ENCODE measurements at regions of chr17 and their contacts with region 1.

Region 1: DNA sequence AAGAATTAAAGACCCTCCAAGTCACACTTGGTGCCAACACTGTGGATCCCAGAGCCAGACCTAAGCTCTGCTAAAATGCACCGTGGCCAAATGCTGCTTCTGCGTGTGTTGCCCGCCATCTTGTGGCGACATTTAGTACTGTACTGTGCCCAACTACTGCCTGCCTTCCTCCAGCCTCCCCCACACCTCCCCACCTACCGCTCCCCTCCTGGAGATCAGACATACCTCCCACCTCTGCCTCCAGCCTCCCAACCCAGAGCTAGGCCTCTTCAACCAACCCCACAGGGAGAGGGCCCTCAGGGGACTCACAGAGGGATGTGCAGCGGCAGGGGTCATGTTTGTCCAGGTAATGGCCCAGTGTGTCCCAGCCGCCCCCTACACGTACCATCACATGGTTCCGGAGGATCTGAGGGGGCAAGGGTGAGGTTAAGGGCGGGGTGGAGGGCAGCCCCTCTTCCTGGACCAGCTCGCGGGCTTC is 5.5 kb downstream of the GAS2L2 start:
- DNase-seq: peak; percentile 78 to 87 (median 83)
- ATAC-seq: peak; percentile 89
- H3K4me3 ChIP-seq: no peak overlapping the region
- H3K27ac ChIP-seq: no peak overlapping the region
- H3K4me1 ChIP-seq: peaks cover 11 to 19% of the 10 kb centered on the region in 2 experiments; a peak in 4 of 5 replicates
- H3K27me3 ChIP-seq: peaks cover 10 to 67% of the 10 kb centered on the region in 2 experiments; a peak in 4 of 5 replicates
- CTCF ChIP-seq: peak; percentile 86 to 90 (median 88)
- EP300 ChIP-seq: no peak
- POLR2A ChIP-seq: no peak
- RAD21 ChIP-seq: peak; percentile 74 to 93

Region 2: GRCh38 chr17:34443619-34444469 is 1303.7 kb before region 1 on chr17:
- CTCF ChIA-PET with region 1: no interaction called
- POLR2A ChIA-PET with region 1: no interaction called
- in situ Hi-C with region 1: loop called (anchors 25 kb)
- intact Hi-C with region 1: no loop called
- DNase-seq: peak; percentile 24 to 45 (median 32)
- ATAC-seq: peak; percentile 79
- H3K4me3 ChIP-seq: no peak overlapping the region
- H3K27ac ChIP-seq: no peak overlapping the region
- H3K4me1 ChIP-seq: no peaks in the 10 kb centered on the region
- H3K27me3 ChIP-seq: peaks cover 2 to 11% of the 10 kb centered on the region in 2 experiments; a peak in 2 of 5 replicates
- CTCF ChIP-seq: peak; percentile 49 to 67 (median 61)
- EP300 ChIP-seq: no peak
- POLR2A ChIP-seq: no peak
- RAD21 ChIP-seq: peak; percentile 55 to 78

Region 3: DNA sequence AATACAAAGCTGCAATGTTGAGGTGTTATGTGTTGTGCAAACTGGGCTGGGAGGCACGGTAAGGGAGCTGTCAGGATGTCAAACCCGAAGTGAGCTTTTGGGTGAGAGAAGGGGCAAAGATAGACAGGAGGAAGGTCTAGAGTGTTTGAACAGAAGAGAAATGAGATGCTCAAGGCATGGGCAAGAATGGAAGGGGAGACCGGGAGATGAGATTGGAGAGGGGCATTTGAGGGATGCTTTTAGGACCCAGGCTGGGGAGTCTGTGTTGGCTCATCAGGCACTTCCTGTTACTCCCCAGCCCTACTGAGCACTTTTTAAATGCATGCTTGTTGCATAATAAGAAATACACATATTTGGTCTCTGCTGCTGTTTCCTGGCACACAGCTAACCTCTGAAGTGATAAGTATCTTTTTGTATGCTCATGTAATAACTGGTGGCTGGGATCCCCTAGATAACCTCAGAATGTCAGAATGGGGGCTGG is 586.3 kb before region 1 on chr17:
- CTCF ChIA-PET with region 1: no interaction called
- POLR2A ChIA-PET with region 1: no interaction called
- in situ Hi-C with region 1: loop called (anchors 10 kb)
- intact Hi-C with region 1: no loop called
- DNase-seq: no peak
- ATAC-seq: no peak
- H3K4me3 ChIP-seq: no peak overlapping the region
- H3K27ac ChIP-seq: no peak overlapping the region
- H3K4me1 ChIP-seq: no peaks in the 10 kb centered on the region; a peak in 1 of 5 replicates
- H3K27me3 ChIP-seq: peaks cover 26 to 41% of the 10 kb centered on the region in 2 experiments
- CTCF ChIP-seq: no peak
- EP300 ChIP-seq: no peak
- POLR2A ChIP-seq: no peak
- RAD21 ChIP-seq: no peak

Region 4: DNA sequence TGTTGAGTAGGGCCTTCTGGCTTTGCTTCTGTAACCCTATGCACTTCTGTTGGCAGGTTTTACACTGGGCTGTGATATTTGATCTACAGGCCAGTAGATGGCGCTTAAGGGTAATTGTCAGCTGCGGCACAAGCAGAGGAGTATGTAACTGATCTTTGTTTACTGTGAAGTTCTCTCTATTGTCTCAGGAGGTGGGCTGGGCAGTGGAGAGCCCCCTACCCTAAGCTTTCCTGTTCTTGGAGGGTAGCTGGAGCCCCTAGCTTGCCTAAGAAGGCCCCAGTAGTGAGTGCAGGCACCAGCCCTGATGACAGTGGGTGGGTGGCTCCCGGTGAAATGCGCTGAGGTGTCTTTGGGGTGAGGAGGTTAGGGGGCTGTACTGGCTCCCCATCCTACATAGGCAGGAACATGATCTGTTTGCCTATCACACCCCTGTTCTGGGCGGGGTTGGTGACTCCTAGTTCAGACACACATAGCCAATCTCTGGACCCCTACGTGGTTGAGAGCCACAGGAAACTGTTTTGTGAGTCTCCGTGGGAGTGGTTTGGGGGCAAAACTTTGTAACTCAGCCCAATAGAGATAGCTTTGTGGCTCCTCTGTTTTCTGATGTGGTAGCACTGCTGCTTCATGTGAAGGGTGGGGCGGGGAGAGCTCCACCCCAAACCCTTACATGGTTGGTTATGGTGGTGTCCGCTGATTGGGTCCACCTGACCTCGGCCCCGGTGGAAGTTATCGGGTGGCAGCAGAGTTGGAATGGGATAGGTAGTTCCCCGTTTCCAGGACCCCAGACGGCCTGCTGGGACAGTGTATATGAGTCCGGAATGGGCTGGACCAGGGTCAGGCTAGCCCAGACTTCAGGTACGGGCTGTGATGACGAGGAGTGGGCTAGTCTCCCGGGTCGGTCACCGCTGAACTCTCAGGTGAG is 434.5 kb before region 1 on chr17:
- CTCF ChIA-PET with region 1: interaction called, 6 read pairs
- POLR2A ChIA-PET with region 1: no interaction called
- in situ Hi-C with region 1: loop called (anchors 5 kb)
- intact Hi-C with region 1: loop called (anchors 2 kb)
- DNase-seq: peak; percentile 58 to 70 (median 64)
- ATAC-seq: peak; percentile 97
- H3K4me3 ChIP-seq: no peak overlapping the region
- H3K27ac ChIP-seq: no peak overlapping the region
- H3K4me1 ChIP-seq: peaks cover 6 to 15% of the 10 kb centered on the region in 2 experiments; a peak in 4 of 5 replicates
- H3K27me3 ChIP-seq: peaks cover 0 to 6% of the 10 kb centered on the region in 2 experiments; a peak in 1 of 5 replicates
- CTCF ChIP-seq: peak; percentile 70 to 83 (median 82)
- EP300 ChIP-seq: no peak
- POLR2A ChIP-seq: no peak
- RAD21 ChIP-seq: peak; percentile 69 to 85

Region 5: DNA sequence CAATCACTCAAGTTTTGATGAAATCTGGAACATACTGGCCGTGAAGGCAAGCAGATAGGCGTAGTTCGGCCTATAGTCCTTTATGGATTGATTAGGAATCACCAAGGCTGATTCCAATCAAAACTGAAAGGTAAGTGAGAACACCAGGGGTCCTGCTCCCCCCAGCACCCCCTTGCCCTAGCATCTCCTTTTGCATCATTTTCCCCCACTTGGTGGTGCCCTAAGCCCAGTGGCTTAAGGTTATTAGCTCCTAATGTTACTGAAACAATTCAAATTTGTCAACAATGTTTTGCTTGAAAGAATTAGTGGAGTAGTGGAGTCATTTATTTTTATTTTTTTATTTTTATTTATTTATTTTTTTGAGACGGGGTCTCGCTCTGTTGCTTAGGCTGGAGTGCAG is 191.9 kb before region 1 on chr17:
- CTCF ChIA-PET with region 1: interaction called, 16 read pairs
- POLR2A ChIA-PET with region 1: interaction called, 5 read pairs
- in situ Hi-C with region 1: loop called (anchors 5 kb)
- intact Hi-C with region 1: loop called (anchors 2 kb)
- DNase-seq: peak; percentile 47 to 62 (median 50)
- ATAC-seq: peak; percentile 65
- H3K4me3 ChIP-seq: no peak overlapping the region
- H3K27ac ChIP-seq: no peak overlapping the region
- H3K4me1 ChIP-seq: peaks cover 4 to 24% of the 10 kb centered on the region in 2 experiments
- H3K27me3 ChIP-seq: no peaks in the 10 kb centered on the region
- CTCF ChIP-seq: peak; percentile 55 to 73 (median 68); a peak in 5 of 6 replicates
- EP300 ChIP-seq: no peak
- POLR2A ChIP-seq: no peak
- RAD21 ChIP-seq: peak; percentile 53 to 69

Region 6: GRCh38 chr17:35709874-35710273 is 37.7 kb before region 1 on chr17:
- CTCF ChIA-PET with region 1: no interaction called
- POLR2A ChIA-PET with region 1: no interaction called
- in situ Hi-C with region 1: no loop called
- intact Hi-C with region 1: no loop called
- DNase-seq: no peak
- ATAC-seq: no peak
- H3K4me3 ChIP-seq: no peak overlapping the region
- H3K27ac ChIP-seq: no peak overlapping the region
- H3K4me1 ChIP-seq: no peaks in the 10 kb centered on the region
- H3K27me3 ChIP-seq: no peaks in the 10 kb centered on the region
- CTCF ChIP-seq: no peak
- EP300 ChIP-seq: no peak
- POLR2A ChIP-seq: no peak
- RAD21 ChIP-seq: no peak